K562 (cell line): ENCODE measurements at regions of chr1 and their contacts with region 1.

Region 1: GRCh38 chr1:117312225-117313138 is 54.8 kb upstream of the MAN1A2 start:
- DNase-seq: peak; percentile 28 to 54 (median 44)
- ATAC-seq: peak; percentile 95
- H3K4me3 ChIP-seq: no peak overlapping the region
- H3K27ac ChIP-seq: no peak overlapping the region
- H3K4me1 ChIP-seq: no peaks in the 10 kb centered on the region
- H3K27me3 ChIP-seq: peaks cover 21 to 23% of the 10 kb centered on the region in 2 experiments; a peak in 4 of 5 replicates
- CTCF ChIP-seq: peak; percentile 53 to 79 (median 72); a peak in 5 of 6 replicates
- EP300 ChIP-seq: no peak
- POLR2A ChIP-seq: no peak
- RAD21 ChIP-seq: peak; percentile 50 to 72

Region 2: GRCh38 chr1:117275055-117275454 is 37.4 kb before region 1 on chr1:
- CTCF ChIA-PET with region 1: no interaction called
- POLR2A ChIA-PET with region 1: no interaction called
- in situ Hi-C with region 1: no loop called
- intact Hi-C with region 1: no loop called
- DNase-seq: no peak
- ATAC-seq: no peak
- H3K4me3 ChIP-seq: no peak overlapping the region
- H3K27ac ChIP-seq: no peak overlapping the region
- H3K4me1 ChIP-seq: no peaks in the 10 kb centered on the region
- H3K27me3 ChIP-seq: peaks cover 0 to 4% of the 10 kb centered on the region in 2 experiments; a peak in 4 of 5 replicates
- CTCF ChIP-seq: no peak
- EP300 ChIP-seq: no peak
- POLR2A ChIP-seq: no peak
- RAD21 ChIP-seq: no peak

Region 3: GRCh38 chr1:117336088-117336817 is 23.8 kb after region 1 on chr1:
- CTCF ChIA-PET with region 1: no interaction called
- POLR2A ChIA-PET with region 1: no interaction called
- in situ Hi-C with region 1: no loop called
- intact Hi-C with region 1: loop called (anchors 2 kb)
- DNase-seq: no peak
- ATAC-seq: no peak
- H3K4me3 ChIP-seq: no peak overlapping the region
- H3K27ac ChIP-seq: no peak overlapping the region
- H3K4me1 ChIP-seq: peaks cover 0 to 12% of the 10 kb centered on the region in 2 experiments; a peak in 3 of 5 replicates
- H3K27me3 ChIP-seq: no peaks in the 10 kb centered on the region
- CTCF ChIP-seq: no peak
- EP300 ChIP-seq: no peak
- POLR2A ChIP-seq: no peak
- RAD21 ChIP-seq: no peak

Region 4: GRCh38 chr1:117473063-117473462 is 160.6 kb after region 1 on chr1:
- CTCF ChIA-PET with region 1: no interaction called
- POLR2A ChIA-PET with region 1: no interaction called
- in situ Hi-C with region 1: no loop called
- intact Hi-C with region 1: loop called (anchors 10 kb)
- DNase-seq: peak in 2 of 4 experiments; percentile 70 to 78
- ATAC-seq: peak; percentile 90
- H3K4me3 ChIP-seq: no peak overlapping the region
- H3K27ac ChIP-seq: peak overlapping the region; percentile 45; the same call in 1 of the 3 replicates
- H3K4me1 ChIP-seq: peaks cover 2 to 22% of the 10 kb centered on the region in 2 experiments; a peak in 4 of 5 replicates
- H3K27me3 ChIP-seq: no peaks in the 10 kb centered on the region
- CTCF ChIP-seq: no peak
- EP300 ChIP-seq: peak; percentile 35; the same call in 1 of the 2 replicates
- POLR2A ChIP-seq: no peak
- RAD21 ChIP-seq: no peak

Region 5: GRCh38 chr1:117501281-117501680 is 188.8 kb after region 1 on chr1:
- CTCF ChIA-PET with region 1: no interaction called
- POLR2A ChIA-PET with region 1: no interaction called
- in situ Hi-C with region 1: no loop called
- intact Hi-C with region 1: loop called (anchors 10 kb)
- DNase-seq: no peak
- ATAC-seq: no peak
- H3K4me3 ChIP-seq: no peak overlapping the region
- H3K27ac ChIP-seq: no peak overlapping the region
- H3K4me1 ChIP-seq: no peaks in the 10 kb centered on the region
- H3K27me3 ChIP-seq: no peaks in the 10 kb centered on the region
- CTCF ChIP-seq: no peak
- EP300 ChIP-seq: no peak
- POLR2A ChIP-seq: no peak
- RAD21 ChIP-seq: no peak